ENCODE measurements at regions of chr2 and their contacts with region 1.

Region 1: GRCh38 chr2:162123806-162124758 is 28.0 kb downstream of the GCG start:
- DNase-seq: no peak
- H3K4me3 Mint-ChIP-seq: no peak overlapping the region
- H3K27ac Mint-ChIP-seq: no peak overlapping the region
- H3K4me1 Mint-ChIP-seq: peaks cover 20% of the 10 kb centered on the region
- H3K27me3 Mint-ChIP-seq: peaks cover 9% of the 10 kb centered on the region

Region 2: DNA sequence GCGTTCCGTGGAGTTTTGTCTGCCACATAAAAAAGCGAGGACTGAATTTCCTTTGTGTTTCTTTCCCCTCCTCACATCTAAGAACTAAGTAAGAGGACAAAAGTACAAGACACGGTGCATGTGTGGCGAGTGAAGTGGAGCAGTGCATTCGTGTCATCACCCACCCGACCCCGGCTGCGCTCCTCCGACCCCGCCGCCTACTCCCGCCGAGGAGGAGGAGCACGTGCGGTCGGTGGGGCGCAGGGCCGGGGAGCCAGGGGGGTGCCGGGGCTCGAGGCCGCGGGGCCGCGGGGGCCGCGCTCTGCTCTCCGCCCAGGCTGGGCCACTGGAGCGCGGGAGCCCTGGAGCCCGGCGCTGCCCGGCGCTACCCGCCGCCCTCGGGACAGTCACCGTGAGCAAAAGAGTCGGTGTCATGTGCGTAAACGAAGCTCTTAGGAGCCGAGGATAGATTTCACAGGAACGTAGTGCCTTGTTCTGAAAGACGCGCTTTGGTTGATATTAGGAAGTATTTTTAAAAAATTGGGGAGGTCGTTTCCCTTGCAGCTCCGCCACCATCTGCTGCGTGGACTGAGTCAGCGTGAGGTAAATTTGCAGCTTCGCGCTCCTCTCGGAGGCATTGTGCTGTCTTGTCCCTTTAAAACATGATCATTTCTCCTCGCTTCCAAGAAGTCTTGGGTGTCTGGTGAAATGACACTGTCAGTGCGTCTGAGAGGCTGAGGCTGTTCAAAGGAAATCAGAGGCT is 697.0 kb before region 1 on chr2:
- intact Hi-C with region 1: loop called (anchors 10 kb)
- DNase-seq: peak; percentile 9
- H3K4me3 Mint-ChIP-seq: peak overlapping the region; percentile 54
- H3K27ac Mint-ChIP-seq: peak overlapping the region; percentile 19
- H3K4me1 Mint-ChIP-seq: peaks cover 25% of the 10 kb centered on the region
- H3K27me3 Mint-ChIP-seq: peaks cover 85% of the 10 kb centered on the region

Region 3: GRCh38 chr2:161992526-161992925 is 131.6 kb before region 1 on chr2:
- intact Hi-C with region 1: loop called (anchors 5 kb)
- DNase-seq: peak; percentile 61
- H3K4me3 Mint-ChIP-seq: peak overlapping the region; percentile 76
- H3K27ac Mint-ChIP-seq: peak overlapping the region; percentile 95
- H3K4me1 Mint-ChIP-seq: peaks cover 68% of the 10 kb centered on the region
- H3K27me3 Mint-ChIP-seq: no peaks in the 10 kb centered on the region

Region 4: GRCh38 chr2:162013514-162014475 is 110.3 kb before region 1 on chr2:
- intact Hi-C with region 1: loop called (anchors 2 kb)
- DNase-seq: no peak
- H3K4me3 Mint-ChIP-seq: peak overlapping the region; percentile 79
- H3K27ac Mint-ChIP-seq: peak overlapping the region; percentile 87
- H3K4me1 Mint-ChIP-seq: peaks cover 67% of the 10 kb centered on the region
- H3K27me3 Mint-ChIP-seq: no peaks in the 10 kb centered on the region

Region 5: GRCh38 chr2:162073888-162074645 is 50.0 kb before region 1 on chr2 and contains the start of gene DPP4:
- intact Hi-C with region 1: loop called (anchors 5 kb)
- DNase-seq: peak; percentile 46
- H3K4me3 Mint-ChIP-seq: peak within 1 kb of the TSS; percentile 87
- H3K27ac Mint-ChIP-seq: peak within 1 kb of the TSS; percentile 74
- H3K4me1 Mint-ChIP-seq: peaks cover 48% of the 10 kb centered on the region
- H3K27me3 Mint-ChIP-seq: no peaks in the 10 kb centered on the region
- total RNA-seq, gene DPP4: 65.8 and 67.0 TPM in 2 replicates

Region 6: GRCh38 chr2:162840621-162841246 is 716.7 kb after region 1 on chr2:
- intact Hi-C with region 1: no loop called
- DNase-seq: peak; percentile 12
- H3K4me3 Mint-ChIP-seq: no peak overlapping the region
- H3K27ac Mint-ChIP-seq: no peak overlapping the region
- H3K4me1 Mint-ChIP-seq: no peaks in the 10 kb centered on the region
- H3K27me3 Mint-ChIP-seq: peaks cover 5% of the 10 kb centered on the region

Region 7: GRCh38 chr2:162874412-162874811 is 750.3 kb after region 1 on chr2:
- intact Hi-C with region 1: no loop called
- DNase-seq: no peak
- H3K4me3 Mint-ChIP-seq: no peak overlapping the region
- H3K27ac Mint-ChIP-seq: no peak overlapping the region
- H3K4me1 Mint-ChIP-seq: no peaks in the 10 kb centered on the region
- H3K27me3 Mint-ChIP-seq: no peaks in the 10 kb centered on the region

Measured in activated T-helper 2 cell treated with anti-CD3 and anti-CD28 coated beads, Interferon-gamma antibody, Interleukin-2, Interleukin-4, amounts not matched to agents 10 μg/mL and 5 μg/mL and 100 μg/mL, durations not matched to agents 14 hours and 24 hours and 36 hours (primary cell).